IMR-90 (cell line): ENCODE measurements at regions of chr3 and their contacts with region 1.

Region 1: GRCh38 chr3:151146071-151146730 is 56.8 kb downstream of the GPR171 start:
- DNase-seq: peak; percentile 69
- ATAC-seq: peak; percentile 97
- H3K4me3 ChIP-seq: no peak overlapping the region
- H3K27ac ChIP-seq: no peak overlapping the region
- H3K4me1 ChIP-seq: peaks cover 2% of the 10 kb centered on the region; the same call in 1 of the 2 replicates
- H3K27me3 ChIP-seq: peaks cover 30% of the 10 kb centered on the region
- CTCF ChIP-seq: peak; percentile 87
- POLR2A ChIP-seq: no peak
- RAD21 ChIP-seq: peak; percentile 90

Region 2: GRCh38 chr3:150721285-150722130 is 424.7 kb before region 1 on chr3:
- CTCF ChIA-PET with region 1: interaction called, 3 read pairs
- POLR2A ChIA-PET with region 1: no interaction called
- dilution Hi-C with region 1: no loop called
- in situ Hi-C with region 1: loop called (anchors 10 kb)
- intact Hi-C with region 1: loop called (anchors 1 kb)
- DNase-seq: peak; percentile 70
- ATAC-seq: peak; percentile 90
- H3K4me3 ChIP-seq: no peak overlapping the region
- H3K27ac ChIP-seq: no peak overlapping the region
- H3K4me1 ChIP-seq: no peaks in the 10 kb centered on the region
- H3K27me3 ChIP-seq: peaks cover 4% of the 10 kb centered on the region
- CTCF ChIP-seq: peak; percentile 89
- POLR2A ChIP-seq: no peak
- RAD21 ChIP-seq: peak; percentile 90

Region 3: DNA sequence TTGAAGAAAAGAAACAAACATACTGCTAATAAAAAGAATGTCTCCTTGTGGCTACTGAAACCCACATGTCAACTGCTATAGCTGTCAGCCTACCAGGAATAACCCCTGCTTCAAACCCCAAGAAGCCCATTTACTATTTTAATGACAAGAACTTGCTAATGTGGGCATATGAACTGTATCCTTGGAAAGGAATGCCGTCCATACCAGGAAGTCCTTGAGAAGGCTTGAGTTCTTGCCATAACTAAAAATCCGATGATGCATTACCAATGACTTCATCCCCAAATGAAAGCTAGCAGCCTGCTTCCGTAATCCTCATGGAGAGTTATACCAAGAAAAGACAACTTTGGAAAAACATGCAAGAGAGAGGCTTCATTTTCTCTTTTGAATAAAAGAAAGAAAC is 275.8 kb before region 1 on chr3:
- CTCF ChIA-PET with region 1: no interaction called
- POLR2A ChIA-PET with region 1: no interaction called
- dilution Hi-C with region 1: no loop called
- in situ Hi-C with region 1: no loop called
- intact Hi-C with region 1: loop called (anchors 1 kb)
- DNase-seq: peak; percentile 52
- ATAC-seq: peak; percentile 54
- H3K4me3 ChIP-seq: no peak overlapping the region
- H3K27ac ChIP-seq: no peak overlapping the region
- H3K4me1 ChIP-seq: no peaks in the 10 kb centered on the region; the same call in 1 of the 2 replicates
- H3K27me3 ChIP-seq: no peaks in the 10 kb centered on the region; the same call in 1 of the 2 replicates
- CTCF ChIP-seq: no peak
- POLR2A ChIP-seq: no peak
- RAD21 ChIP-seq: no peak

Region 4: DNA sequence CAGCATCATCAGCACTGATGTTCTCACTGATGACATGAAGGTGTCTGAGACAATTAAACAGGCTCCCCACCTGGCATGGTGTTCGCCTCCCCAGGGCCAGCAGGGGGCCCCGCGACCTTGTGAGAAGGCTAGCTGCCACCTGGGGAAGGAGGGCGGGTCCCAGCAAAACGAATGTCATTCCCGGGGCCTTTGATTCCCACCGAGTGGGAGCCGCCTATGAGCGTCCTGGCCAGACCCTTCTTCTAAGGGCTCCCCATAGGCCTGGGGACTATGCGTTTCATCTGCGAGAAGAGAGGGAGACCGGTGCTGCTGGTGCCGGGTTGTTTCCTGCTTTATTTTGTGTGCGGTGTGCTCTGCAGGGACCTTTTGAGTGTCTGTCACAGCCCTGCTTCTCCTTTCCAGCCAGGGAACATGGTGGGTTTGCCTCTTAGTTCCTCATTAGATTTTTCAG is 220.4 kb before region 1 on chr3:
- CTCF ChIA-PET with region 1: no interaction called
- POLR2A ChIA-PET with region 1: no interaction called
- dilution Hi-C with region 1: no loop called
- in situ Hi-C with region 1: loop called (anchors 25 kb)
- intact Hi-C with region 1: loop called (anchors 1 kb)
- DNase-seq: peak; percentile 4
- ATAC-seq: peak; percentile 51; the same call in 1 of the 2 replicates
- H3K4me3 ChIP-seq: no peak overlapping the region
- H3K27ac ChIP-seq: no peak overlapping the region
- H3K4me1 ChIP-seq: no peaks in the 10 kb centered on the region
- H3K27me3 ChIP-seq: peaks cover 29% of the 10 kb centered on the region
- CTCF ChIP-seq: peak; percentile 46
- POLR2A ChIP-seq: no peak
- RAD21 ChIP-seq: peak; percentile 63

Region 5: GRCh38 chr3:151236736-151237135 is 90.5 kb after region 1 on chr3:
- CTCF ChIA-PET with region 1: no interaction called
- POLR2A ChIA-PET with region 1: no interaction called
- dilution Hi-C with region 1: no loop called
- in situ Hi-C with region 1: no loop called
- intact Hi-C with region 1: no loop called
- DNase-seq: peak; percentile 44
- ATAC-seq: no peak
- H3K4me3 ChIP-seq: no peak overlapping the region
- H3K27ac ChIP-seq: no peak overlapping the region
- H3K4me1 ChIP-seq: peaks cover 2% of the 10 kb centered on the region; the same call in 1 of the 2 replicates
- H3K27me3 ChIP-seq: no peaks in the 10 kb centered on the region
- CTCF ChIP-seq: no peak
- POLR2A ChIP-seq: no peak
- RAD21 ChIP-seq: no peak